Mammary epithelial cell (primary cell): ENCODE measurements at regions of chr15 and their contacts with region 1.

Region 1: GRCh38 chr15:62977952-62978811 is 64.4 kb upstream of the TPM1 start:
- DNase-seq: peak; percentile 57
- H3K4me3 ChIP-seq: no peak overlapping the region
- H3K27ac ChIP-seq: peak overlapping the region; percentile 2
- H3K4me1 ChIP-seq: peaks cover 21% of the 10 kb centered on the region
- H3K27me3 ChIP-seq: no peaks in the 10 kb centered on the region
- CTCF ChIP-seq: no peak

Region 2: DNA sequence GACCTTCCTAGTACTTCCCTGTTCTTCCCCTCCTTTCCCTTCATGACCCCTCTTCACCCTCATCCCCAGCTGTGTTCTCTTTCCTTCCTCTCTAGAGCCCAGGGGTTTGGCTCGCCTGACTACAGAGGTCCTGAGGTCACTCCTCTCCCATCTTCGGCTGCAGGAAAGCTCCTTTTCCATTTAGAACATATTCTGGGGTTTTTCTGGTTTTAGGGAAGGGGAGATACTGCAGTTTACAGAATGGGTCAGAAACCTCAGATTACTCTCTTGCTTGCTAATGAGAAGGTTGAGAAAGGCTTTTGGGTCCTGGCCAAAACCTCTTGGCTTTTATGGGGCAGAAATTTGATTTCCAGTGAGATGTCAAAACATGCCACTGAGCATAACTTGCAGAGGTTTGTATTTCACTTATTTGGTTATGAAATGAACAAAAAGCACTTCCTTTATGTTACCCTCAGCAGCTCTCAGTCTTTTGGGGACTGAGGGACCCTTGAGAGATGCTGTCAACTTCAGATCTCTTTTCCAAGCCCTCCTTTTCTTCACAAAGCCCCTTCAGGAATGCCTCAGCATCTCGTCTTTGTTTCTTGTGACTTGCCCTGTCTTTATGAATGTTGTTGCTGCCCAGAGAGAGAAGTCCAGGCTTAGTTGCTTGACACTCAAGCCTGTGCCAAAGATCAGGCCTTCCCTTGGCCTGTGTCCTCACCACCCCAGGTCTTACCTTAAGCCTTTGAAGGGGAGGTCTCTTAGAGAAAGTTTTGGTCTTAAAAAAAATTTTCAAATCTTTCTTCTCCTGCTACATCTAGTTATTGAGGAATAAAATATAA is 57.3 kb before region 1 on chr15:
- CTCF ChIA-PET with region 1: no interaction called
- dilution Hi-C with region 1: loop called (anchors 5 kb)
- in situ Hi-C with region 1: no loop called
- intact Hi-C with region 1: no loop called
- DNase-seq: peak; percentile 34
- H3K4me3 ChIP-seq: no peak overlapping the region
- H3K27ac ChIP-seq: no peak overlapping the region
- H3K4me1 ChIP-seq: peaks cover 7% of the 10 kb centered on the region
- H3K27me3 ChIP-seq: no peaks in the 10 kb centered on the region
- CTCF ChIP-seq: no peak

Region 3: DNA sequence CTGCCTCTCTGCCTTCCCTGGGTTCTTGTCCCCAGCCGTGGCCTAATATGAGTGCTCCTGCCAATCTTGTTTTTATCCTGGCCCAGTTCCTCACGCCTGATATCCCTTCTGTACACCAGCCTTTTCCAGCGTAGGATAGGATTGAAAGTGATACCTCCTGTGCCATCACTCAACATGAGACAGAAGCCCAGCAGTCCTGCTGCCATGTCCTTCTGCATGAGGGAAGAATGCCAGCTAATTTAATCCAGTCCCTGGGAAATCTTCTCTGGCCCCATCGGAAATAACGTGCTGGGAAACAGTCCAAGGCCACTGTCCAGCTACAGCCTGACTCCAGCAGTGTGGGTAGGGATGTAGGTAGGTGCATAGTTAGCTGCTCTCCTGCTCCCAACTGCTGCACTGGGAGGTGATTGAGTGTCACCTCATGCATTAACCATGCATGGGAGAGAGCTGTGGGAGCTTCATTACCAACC is 27.7 kb before region 1 on chr15:
- CTCF ChIA-PET with region 1: no interaction called
- dilution Hi-C with region 1: no loop called
- in situ Hi-C with region 1: no loop called
- intact Hi-C with region 1: no loop called
- DNase-seq: no peak
- H3K4me3 ChIP-seq: no peak overlapping the region
- H3K27ac ChIP-seq: no peak overlapping the region
- H3K4me1 ChIP-seq: no peaks in the 10 kb centered on the region
- H3K27me3 ChIP-seq: no peaks in the 10 kb centered on the region
- CTCF ChIP-seq: no peak

Region 4: DNA sequence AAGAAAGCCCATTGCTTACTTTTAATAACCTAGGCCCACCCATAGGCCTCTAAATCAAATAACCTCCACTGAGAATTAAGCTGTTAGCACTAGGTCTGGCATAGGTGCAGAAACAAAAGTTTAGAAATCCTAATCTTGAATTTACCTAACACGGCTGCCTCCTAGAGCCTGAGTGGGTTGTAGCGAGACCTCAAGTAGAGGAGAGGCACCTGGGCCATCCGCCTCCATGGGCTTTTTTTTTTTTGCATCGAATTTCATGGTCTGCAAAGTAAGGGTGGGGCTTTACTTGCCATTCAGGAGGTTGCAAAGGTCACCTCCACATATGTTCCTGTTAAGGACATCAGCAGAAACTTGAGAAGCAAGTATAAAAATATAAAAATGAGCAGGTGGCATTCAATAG is 57.8 kb after region 1 on chr15:
- CTCF ChIA-PET with region 1: no interaction called
- dilution Hi-C with region 1: no loop called
- in situ Hi-C with region 1: no loop called
- intact Hi-C with region 1: no loop called
- DNase-seq: no peak
- H3K4me3 ChIP-seq: no peak overlapping the region
- H3K27ac ChIP-seq: no peak overlapping the region
- H3K4me1 ChIP-seq: peaks cover 39% of the 10 kb centered on the region
- H3K27me3 ChIP-seq: no peaks in the 10 kb centered on the region
- CTCF ChIP-seq: peak in 1 of 2 donors; percentile 43